Activated CD4-positive, alpha-beta memory T cell treated with anti-CD3 and anti-CD28 coated beads, Interleukin-2, amount 10 ng/mL, durations not matched to agents 7 days and 5 days (primary cell): ENCODE measurements at regions of chr15 and their contacts with region 1.

Region 1: DNA sequence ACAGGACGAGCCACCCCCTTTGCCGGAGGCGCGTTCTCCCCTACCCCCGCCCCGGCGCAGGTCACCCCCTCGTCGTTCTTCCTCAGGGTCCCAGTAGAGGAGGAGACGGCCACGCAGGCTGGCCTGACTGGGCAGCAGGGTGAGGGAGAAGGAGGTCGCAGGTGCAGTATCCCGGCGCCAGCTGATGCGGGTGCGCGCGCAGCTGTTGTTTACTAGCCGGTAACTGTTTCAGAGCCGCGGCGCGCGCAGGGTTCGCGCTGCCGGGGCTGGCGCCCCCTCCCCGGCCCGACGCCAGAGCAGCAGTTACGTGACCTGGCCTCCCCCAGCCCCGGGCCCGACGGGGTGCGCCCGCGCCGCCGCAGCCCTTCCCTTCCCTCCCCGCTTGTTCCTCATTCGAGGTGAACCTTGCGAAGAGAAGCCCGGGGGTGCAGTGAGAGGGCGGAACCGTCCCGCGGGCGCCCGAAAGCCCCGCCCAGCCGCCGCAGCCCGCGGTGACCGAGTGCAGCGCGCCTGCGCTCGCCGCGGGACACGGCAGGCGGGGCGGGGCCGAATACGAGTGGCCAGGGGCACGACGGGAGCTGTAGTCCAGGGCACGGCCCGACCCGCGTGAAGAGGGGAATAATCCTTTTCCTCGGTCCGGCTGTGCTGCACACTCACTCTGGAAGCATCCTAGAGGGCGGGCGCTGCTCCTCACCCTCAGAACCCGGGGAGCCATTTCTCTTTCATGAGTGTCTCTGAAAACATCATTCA is at the start of gene SLC12A6:
- DNase-seq: peak; percentile 91
- H3K4me3 Mint-ChIP-seq: peak within 1 kb of the TSS; percentile 96
- H3K27ac Mint-ChIP-seq: peak within 1 kb of the TSS; percentile 95
- H3K4me1 Mint-ChIP-seq: peaks cover 65% of the 10 kb centered on the region
- H3K27me3 Mint-ChIP-seq: no peaks in the 10 kb centered on the region
- total RNA-seq, gene SLC12A6: 30.6 to 31.7 TPM

Region 2: DNA sequence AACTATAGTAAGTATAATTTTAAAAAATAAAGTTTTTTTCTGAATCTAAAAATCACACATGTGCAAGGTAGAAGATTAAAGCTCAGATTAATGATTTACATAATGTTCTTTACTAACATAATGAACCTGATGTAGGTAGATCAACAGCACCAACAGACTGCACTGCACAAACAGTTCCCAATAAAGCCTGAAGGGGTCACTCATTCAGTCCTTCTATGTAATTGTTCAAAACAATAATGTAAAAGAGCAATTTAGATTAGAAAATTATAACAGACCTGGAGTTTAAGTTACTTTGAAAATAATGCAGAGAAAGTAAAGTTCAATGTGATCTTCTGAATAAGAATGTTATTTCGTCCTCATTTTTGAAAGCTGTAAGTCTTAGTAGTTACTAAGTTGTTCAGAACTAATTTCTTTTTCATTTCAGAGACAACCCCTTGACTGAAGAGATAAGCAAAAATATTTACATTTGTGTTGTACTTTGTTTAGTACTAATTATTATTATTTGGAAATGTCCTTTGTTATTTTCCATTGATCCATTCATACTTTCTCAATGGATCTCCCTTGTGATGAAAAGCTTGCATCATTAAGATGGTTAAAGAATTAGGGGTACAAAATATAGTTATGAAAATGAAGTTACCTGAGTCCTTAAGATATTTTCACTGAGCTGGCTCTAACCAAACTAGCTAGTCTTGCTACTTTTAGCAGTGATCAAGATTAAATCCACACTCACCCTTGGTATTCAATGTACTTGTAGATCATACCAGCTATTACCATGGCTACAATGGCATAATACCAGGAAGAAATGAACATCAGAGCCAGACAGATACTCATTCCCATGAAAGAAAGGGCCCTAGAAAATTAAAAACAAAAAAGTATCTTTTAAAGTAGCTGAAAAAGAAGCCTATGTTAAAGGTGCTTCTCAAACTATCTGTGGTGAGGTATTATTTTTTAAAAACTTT is 96.1 kb before region 1 on chr15:
- CTCF ChIA-PET with region 1: interaction called, 21 read pairs
- POLR2A ChIA-PET with region 1: interaction called, 11 read pairs
- DNase-seq: peak; percentile 26
- H3K4me3 Mint-ChIP-seq: no peak overlapping the region
- H3K27ac Mint-ChIP-seq: no peak overlapping the region
- H3K4me1 Mint-ChIP-seq: peaks cover 29% of the 10 kb centered on the region
- H3K27me3 Mint-ChIP-seq: no peaks in the 10 kb centered on the region

Region 3: GRCh38 chr15:34292621-34293020 is 45.1 kb before region 1 on chr15:
- CTCF ChIA-PET with region 1: no interaction called
- POLR2A ChIA-PET with region 1: no interaction called
- DNase-seq: no peak
- H3K4me3 Mint-ChIP-seq: no peak overlapping the region
- H3K27ac Mint-ChIP-seq: no peak overlapping the region
- H3K4me1 Mint-ChIP-seq: no peaks in the 10 kb centered on the region
- H3K27me3 Mint-ChIP-seq: no peaks in the 10 kb centered on the region

Region 4: GRCh38 chr15:34318277-34319079 is 19.3 kb before region 1 on chr15:
- CTCF ChIA-PET with region 1: interaction called, 3 read pairs
- POLR2A ChIA-PET with region 1: interaction called, 79 read pairs
- DNase-seq: no peak
- H3K4me3 Mint-ChIP-seq: peak overlapping the region; percentile 81
- H3K27ac Mint-ChIP-seq: peak overlapping the region; percentile 60
- H3K4me1 Mint-ChIP-seq: peaks cover 26% of the 10 kb centered on the region
- H3K27me3 Mint-ChIP-seq: no peaks in the 10 kb centered on the region

Region 5: GRCh38 chr15:34461730-34462129 is 124.0 kb after region 1 on chr15:
- CTCF ChIA-PET with region 1: no interaction called
- POLR2A ChIA-PET with region 1: no interaction called
- DNase-seq: no peak
- H3K4me3 Mint-ChIP-seq: no peak overlapping the region
- H3K27ac Mint-ChIP-seq: no peak overlapping the region
- H3K4me1 Mint-ChIP-seq: no peaks in the 10 kb centered on the region
- H3K27me3 Mint-ChIP-seq: peaks cover 25% of the 10 kb centered on the region